Heart left ventricle (tissue), 16 donors: ENCODE measurements at regions of chr17 and their contacts with region 1.

Region 1: GRCh38 chr17:26731005-26731921 is 562.7 kb upstream of the WSB1 start:
- DNase-seq: peak in 1 of 5 donors; percentile 52
- ATAC-seq: no peak
- H3K4me3 ChIP-seq: no peak overlapping the region
- H3K27ac ChIP-seq: no peak overlapping the region
- H3K4me1 ChIP-seq: no peaks in the 10 kb centered on the region
- H3K27me3 ChIP-seq: peaks cover 0 to 25% (median 0%) of the 10 kb centered on the region in 9 donors
- CTCF ChIP-seq: no peak
- POLR2A ChIP-seq: no peak

Region 2: GRCh38 chr17:26792486-26792885 is 61.2 kb after region 1 on chr17:
- intact Hi-C with region 1: loop called in 1 of 10 experiments (anchors 10 kb)
- DNase-seq: no peak
- ATAC-seq: no peak
- H3K4me3 ChIP-seq: no peak overlapping the region
- H3K27ac ChIP-seq: no peak overlapping the region
- H3K4me1 ChIP-seq: no peaks in the 10 kb centered on the region
- H3K27me3 ChIP-seq: no peaks in the 10 kb centered on the region
- CTCF ChIP-seq: no peak
- POLR2A ChIP-seq: no peak